ENCODE measurements at regions of chr7 and their contacts with region 1.

Region 1: DNA sequence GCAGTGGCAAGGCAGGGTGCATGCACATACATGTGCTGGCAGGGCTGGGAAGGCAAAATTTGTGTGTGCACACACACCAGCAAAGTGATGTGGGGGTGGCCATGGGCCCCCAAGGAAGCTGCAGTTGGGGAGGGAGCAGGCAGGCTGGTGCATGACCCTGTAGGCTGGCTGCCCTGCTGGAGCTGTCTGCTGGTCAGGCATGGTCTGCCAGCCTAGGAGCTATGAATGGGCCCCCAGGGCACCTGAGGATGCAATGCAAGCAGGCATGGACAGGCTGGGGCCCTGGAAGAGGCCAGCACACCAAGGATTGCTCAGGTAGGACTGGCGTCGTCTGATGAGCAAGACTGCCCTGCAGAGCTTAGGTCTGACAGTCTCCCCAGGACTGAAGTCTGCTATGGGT is 18.2 kb upstream of the PPP1R3A start:
- DNase-seq: no peak
- H3K4me3 ChIP-seq: no peak overlapping the region
- H3K27ac ChIP-seq: no peak overlapping the region
- H3K27me3 ChIP-seq: no peaks in the 10 kb centered on the region
- CTCF ChIP-seq: no peak

Region 2: GRCh38 chr7:113209449-113210203 is 727.4 kb before region 1 on chr7:
- CTCF ChIA-PET with region 1: no interaction called
- POLR2A ChIA-PET with region 1: no interaction called
- DNase-seq: no peak
- H3K4me3 ChIP-seq: no peak overlapping the region
- H3K27ac ChIP-seq: no peak overlapping the region
- H3K27me3 ChIP-seq: no peaks in the 10 kb centered on the region
- CTCF ChIP-seq: no peak

Region 3: GRCh38 chr7:113831556-113831955 is 105.4 kb before region 1 on chr7:
- CTCF ChIA-PET with region 1: interaction called, 3 read pairs
- POLR2A ChIA-PET with region 1: interaction called, 10 read pairs
- DNase-seq: no peak
- H3K4me3 ChIP-seq: no peak overlapping the region
- H3K27ac ChIP-seq: no peak overlapping the region
- H3K27me3 ChIP-seq: no peaks in the 10 kb centered on the region
- CTCF ChIP-seq: no peak

Region 4: DNA sequence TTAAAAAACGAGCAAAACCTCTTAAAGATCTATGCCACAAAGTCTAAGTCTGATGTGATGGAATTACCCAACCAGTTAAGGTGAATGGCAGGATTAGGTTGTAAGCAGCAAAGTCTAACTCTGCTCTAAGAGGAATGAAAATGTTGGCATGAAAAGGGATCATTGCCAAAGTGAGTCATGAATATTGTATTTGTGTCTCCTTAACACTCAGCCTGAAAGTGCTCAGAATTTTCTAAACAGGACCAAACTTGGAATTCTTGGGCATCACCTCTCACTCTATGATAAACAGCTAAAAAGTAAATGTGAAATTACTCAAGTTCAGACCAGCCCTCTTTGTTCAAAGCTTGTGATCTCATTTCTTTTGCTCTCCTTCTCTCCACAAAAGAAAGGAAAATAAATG is 45.2 kb before region 1 on chr7:
- CTCF ChIA-PET with region 1: no interaction called
- POLR2A ChIA-PET with region 1: no interaction called
- DNase-seq: peak; percentile 32
- H3K4me3 ChIP-seq: no peak overlapping the region
- H3K27ac ChIP-seq: no peak overlapping the region
- H3K27me3 ChIP-seq: no peaks in the 10 kb centered on the region
- CTCF ChIP-seq: no peak